ENCODE measurements at regions of chr10 and their contacts with region 1.

Region 1: GRCh38 chr10:117174439-117175214 is 22.7 kb upstream of the KCNK18 start:
- DNase-seq: peak; percentile 93
- ATAC-seq: peak; percentile 91
- H3K4me3 Mint-ChIP-seq: peak overlapping the region; percentile 76
- H3K27ac Mint-ChIP-seq: peak overlapping the region; percentile 37
- H3K4me1 Mint-ChIP-seq: peaks cover 22% of the 10 kb centered on the region
- H3K27me3 Mint-ChIP-seq: peaks cover 34% of the 10 kb centered on the region

Region 2: GRCh38 chr10:116444527-116445142 is 730.0 kb before region 1 on chr10:
- CTCF ChIA-PET with region 1: no interaction called
- POLR2A ChIA-PET with region 1: no interaction called
- intact Hi-C with region 1: loop called in 1 of 2 experiments (anchors 10 kb)
- DNase-seq: peak; percentile 29
- ATAC-seq: no peak
- H3K4me3 Mint-ChIP-seq: no peak overlapping the region
- H3K27ac Mint-ChIP-seq: no peak overlapping the region
- H3K4me1 Mint-ChIP-seq: no peaks in the 10 kb centered on the region
- H3K27me3 Mint-ChIP-seq: peaks cover 8% of the 10 kb centered on the region

Region 3: DNA sequence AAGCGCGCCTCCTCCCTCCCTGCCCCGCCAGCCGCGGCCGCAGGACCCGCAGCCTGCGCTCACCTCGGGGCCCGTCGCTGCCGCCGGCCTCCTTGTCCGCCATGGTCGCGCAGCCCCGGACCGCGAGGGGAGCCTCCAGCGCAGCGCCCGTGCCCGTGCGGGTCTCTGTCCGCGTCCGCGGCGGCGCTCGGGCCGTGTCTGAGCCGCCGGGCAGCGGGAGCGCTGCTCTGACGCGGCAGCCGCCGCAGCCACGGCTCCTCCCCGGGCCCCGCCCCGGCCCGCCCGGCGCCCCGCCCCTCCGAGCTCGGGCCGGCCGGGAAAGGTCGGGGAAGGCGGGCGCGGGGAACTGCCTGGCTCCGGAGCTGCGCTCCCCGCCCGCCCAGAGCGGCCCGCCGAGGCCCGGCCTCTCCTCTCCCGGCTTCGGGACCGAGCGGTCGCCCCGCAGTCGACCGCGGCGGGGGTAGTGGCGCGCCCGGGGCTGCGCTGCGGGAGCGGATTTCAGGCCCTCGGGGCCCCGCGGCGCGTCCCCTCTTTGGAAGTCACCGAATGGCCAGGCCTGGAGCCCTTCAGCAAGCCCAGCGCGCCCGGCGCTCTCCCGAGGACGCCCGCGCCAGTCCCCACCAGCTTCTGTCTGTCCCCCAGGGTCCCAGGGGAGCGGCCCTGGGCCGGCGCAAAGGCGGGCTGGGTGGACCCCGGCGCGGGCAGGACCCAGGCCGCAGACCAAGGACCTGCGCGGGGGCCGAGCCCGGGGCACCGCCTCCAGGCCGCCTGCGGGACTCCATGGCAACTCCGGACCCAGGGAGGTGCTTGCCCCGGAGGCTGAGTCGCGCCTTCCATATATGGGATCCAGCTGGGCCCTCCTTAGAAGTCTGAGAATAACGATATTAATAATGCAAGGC is 432.0 kb before region 1 on chr10 and contains the start of gene HSPA12A:
- CTCF ChIA-PET with region 1: no interaction called
- POLR2A ChIA-PET with region 1: no interaction called
- intact Hi-C with region 1: loop called in 1 of 2 experiments (anchors 5 kb)
- DNase-seq: peak; percentile 72
- ATAC-seq: peak; percentile 92
- H3K4me3 Mint-ChIP-seq: peak within 1 kb of the TSS; percentile 43
- H3K27ac Mint-ChIP-seq: no peak within 1 kb of the TSS
- H3K4me1 Mint-ChIP-seq: peaks cover 4% of the 10 kb centered on the region
- H3K27me3 Mint-ChIP-seq: peaks cover 53% of the 10 kb centered on the region
- total RNA-seq, gene HSPA12A: 0.41 to 0.74 TPM

Region 4: GRCh38 chr10:116796910-116797513 is 377.6 kb before region 1 on chr10:
- CTCF ChIA-PET with region 1: interaction called, 114 read pairs
- POLR2A ChIA-PET with region 1: no interaction called
- intact Hi-C with region 1: loop called (anchors 1 kb)
- DNase-seq: peak; percentile 86
- ATAC-seq: peak; percentile 68
- H3K4me3 Mint-ChIP-seq: no peak overlapping the region
- H3K27ac Mint-ChIP-seq: no peak overlapping the region
- H3K4me1 Mint-ChIP-seq: peaks cover 7% of the 10 kb centered on the region
- H3K27me3 Mint-ChIP-seq: peaks cover 25% of the 10 kb centered on the region

Region 5: DNA sequence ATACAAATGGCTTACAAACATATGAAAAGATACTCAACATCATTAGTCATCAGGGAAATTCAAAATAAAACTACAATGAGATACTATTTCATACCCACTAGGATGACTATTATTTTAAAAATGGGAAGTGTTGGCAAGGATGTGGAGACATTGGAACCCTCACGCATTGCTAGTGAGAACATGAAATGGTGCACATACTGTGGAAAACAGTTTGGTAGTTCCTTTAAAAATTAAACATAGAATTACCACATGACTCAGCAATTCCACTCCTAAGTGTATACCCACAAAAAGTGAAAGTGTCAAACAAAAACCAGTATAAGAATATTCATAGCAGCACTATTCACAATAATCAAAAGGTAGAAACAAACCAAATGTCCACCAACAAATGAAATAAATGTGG is 121.1 kb before region 1 on chr10:
- CTCF ChIA-PET with region 1: no interaction called
- POLR2A ChIA-PET with region 1: no interaction called
- intact Hi-C with region 1: no loop called
- DNase-seq: no peak
- ATAC-seq: no peak
- H3K4me3 Mint-ChIP-seq: no peak overlapping the region
- H3K27ac Mint-ChIP-seq: no peak overlapping the region
- H3K4me1 Mint-ChIP-seq: no peaks in the 10 kb centered on the region
- H3K27me3 Mint-ChIP-seq: peaks cover 8% of the 10 kb centered on the region

Region 6: DNA sequence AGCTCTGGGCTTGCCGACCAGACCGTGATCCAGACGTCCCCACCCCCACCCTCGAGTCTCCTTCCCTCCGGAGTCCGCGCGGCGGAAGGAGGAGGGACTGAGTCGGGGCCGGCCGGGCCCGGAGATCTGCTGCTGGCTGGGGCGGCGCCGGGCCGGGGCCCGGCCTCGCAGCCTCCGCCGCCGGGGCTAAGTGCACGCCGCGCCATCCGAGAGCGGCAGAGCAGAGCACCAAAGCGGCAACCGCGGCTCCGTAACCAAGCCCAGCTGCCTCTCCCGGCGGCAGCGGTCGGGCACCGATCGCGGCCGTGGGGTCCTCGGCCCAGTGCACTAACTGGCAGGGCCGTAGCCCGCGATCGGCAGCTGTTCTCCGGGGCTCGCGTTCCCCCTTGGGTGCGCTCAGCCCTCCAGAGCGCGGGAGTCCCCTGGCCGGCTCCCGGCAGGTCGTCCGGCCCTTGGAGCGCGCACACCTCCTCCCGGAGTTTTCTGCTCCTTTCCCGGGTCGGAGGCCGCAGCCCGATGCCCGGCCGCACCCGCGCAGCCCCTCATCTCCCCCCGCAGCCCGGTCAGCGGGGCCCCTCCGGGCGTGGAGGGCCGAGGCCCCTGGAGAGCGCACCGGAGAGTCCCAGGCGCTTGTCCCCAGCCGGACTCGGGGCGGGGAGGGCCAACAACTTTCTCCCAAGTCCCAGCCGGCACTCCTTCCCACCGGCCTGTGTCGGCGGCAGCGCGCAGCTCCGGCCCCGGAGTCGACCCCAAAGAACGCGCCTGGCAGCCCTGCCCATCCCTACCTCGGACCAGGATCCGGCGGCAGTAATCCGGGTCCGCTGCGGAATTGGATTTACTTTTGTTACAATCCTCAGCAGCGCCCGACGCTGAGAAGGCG is 37.4 kb before region 1 on chr10:
- CTCF ChIA-PET with region 1: interaction called, 19 read pairs
- POLR2A ChIA-PET with region 1: no interaction called
- intact Hi-C with region 1: loop called in 1 of 2 experiments (anchors 2 kb)
- DNase-seq: peak; percentile 31
- ATAC-seq: no peak
- H3K4me3 Mint-ChIP-seq: peak overlapping the region; percentile 23
- H3K27ac Mint-ChIP-seq: no peak overlapping the region
- H3K4me1 Mint-ChIP-seq: peaks cover 29% of the 10 kb centered on the region
- H3K27me3 Mint-ChIP-seq: peaks cover 66% of the 10 kb centered on the region

Measured in activated CD4-positive, alpha-beta T cell treated with anti-CD3 and anti-CD28 coated beads for 36 hours (primary cell).